Activated CD4-positive, alpha-beta T cell treated with anti-CD3 and anti-CD28 coated beads, Interleukin-2, amount 10 ng/mL, durations not matched to agents 24 days and 14 days (primary cell): ENCODE measurements at regions of chr2 and their contacts with region 1.

Region 1: GRCh38 chr2:15142069-15142873 is 418.9 kb downstream of the NBAS start:
- DNase-seq: peak; percentile 90
- H3K4me3 Mint-ChIP-seq: peak overlapping the region; percentile 45
- H3K27ac Mint-ChIP-seq: peak overlapping the region; percentile 90
- H3K4me1 Mint-ChIP-seq: peaks cover 23% of the 10 kb centered on the region
- H3K27me3 Mint-ChIP-seq: no peaks in the 10 kb centered on the region

Region 2: GRCh38 chr2:14855741-14856140 is 286.5 kb before region 1 on chr2:
- intact Hi-C with region 1: no loop called
- DNase-seq: no peak
- H3K4me3 Mint-ChIP-seq: no peak overlapping the region
- H3K27ac Mint-ChIP-seq: no peak overlapping the region
- H3K4me1 Mint-ChIP-seq: no peaks in the 10 kb centered on the region
- H3K27me3 Mint-ChIP-seq: no peaks in the 10 kb centered on the region

Region 3: DNA sequence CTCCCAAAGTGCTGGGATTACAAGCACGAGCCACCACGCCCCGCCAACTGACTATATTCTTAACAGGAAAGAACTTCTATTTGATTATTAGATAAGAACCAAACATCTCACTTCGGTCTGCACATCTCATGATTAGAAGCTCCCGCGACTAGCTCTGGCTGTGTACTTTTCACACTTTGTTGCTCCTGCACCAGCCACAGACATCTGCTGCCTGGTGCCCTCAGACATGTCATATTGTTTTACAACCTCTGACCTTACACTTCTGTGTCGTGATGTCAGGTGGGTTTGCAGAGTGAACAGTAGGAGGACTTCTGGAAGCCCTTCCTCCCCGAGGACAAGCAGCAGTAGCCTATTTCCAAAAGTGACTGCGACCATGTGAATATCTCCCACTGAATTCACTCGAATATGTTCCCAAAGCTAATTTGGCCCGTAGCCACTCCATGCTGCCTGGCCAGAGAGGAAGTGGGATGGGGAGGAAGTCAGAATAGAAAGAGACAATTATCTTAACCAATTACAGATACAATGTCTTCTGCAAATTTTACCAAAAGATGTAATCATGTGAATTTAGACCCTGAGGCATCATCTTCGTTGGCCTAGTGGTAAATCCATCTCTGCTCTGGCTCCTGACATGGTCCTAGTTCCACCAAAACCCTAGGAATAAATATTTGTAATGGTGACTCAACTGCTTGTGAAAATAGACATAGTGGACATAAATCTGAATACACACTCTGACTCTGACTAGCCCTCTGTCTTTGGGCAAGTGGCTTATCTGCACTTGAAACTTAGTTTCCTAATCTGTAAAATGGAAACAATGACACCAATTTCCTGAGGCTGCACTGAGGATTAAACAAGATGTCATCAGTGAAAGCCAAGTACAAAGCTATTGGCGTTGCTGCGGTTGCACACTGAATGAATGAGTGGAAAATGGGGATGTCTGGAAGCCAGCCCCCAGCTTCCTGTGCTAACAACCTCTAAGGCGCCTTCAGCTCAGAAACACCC is 103.6 kb before region 1 on chr2:
- intact Hi-C with region 1: loop called (anchors 1 kb)
- DNase-seq: peak; percentile 47
- H3K4me3 Mint-ChIP-seq: no peak overlapping the region
- H3K27ac Mint-ChIP-seq: no peak overlapping the region
- H3K4me1 Mint-ChIP-seq: peaks cover 6% of the 10 kb centered on the region
- H3K27me3 Mint-ChIP-seq: peaks cover 2% of the 10 kb centered on the region

Region 4: GRCh38 chr2:15084826-15085489 is 57.3 kb before region 1 on chr2:
- intact Hi-C with region 1: no loop called
- DNase-seq: no peak
- H3K4me3 Mint-ChIP-seq: no peak overlapping the region
- H3K27ac Mint-ChIP-seq: no peak overlapping the region
- H3K4me1 Mint-ChIP-seq: no peaks in the 10 kb centered on the region
- H3K27me3 Mint-ChIP-seq: peaks cover 8% of the 10 kb centered on the region

Region 5: GRCh38 chr2:15159751-15160177 is 17.5 kb after region 1 on chr2:
- intact Hi-C with region 1: loop called (anchors 2 kb)
- DNase-seq: peak; percentile 69
- H3K4me3 Mint-ChIP-seq: no peak overlapping the region
- H3K27ac Mint-ChIP-seq: no peak overlapping the region
- H3K4me1 Mint-ChIP-seq: peaks cover 3% of the 10 kb centered on the region
- H3K27me3 Mint-ChIP-seq: peaks cover 7% of the 10 kb centered on the region

Region 6: DNA sequence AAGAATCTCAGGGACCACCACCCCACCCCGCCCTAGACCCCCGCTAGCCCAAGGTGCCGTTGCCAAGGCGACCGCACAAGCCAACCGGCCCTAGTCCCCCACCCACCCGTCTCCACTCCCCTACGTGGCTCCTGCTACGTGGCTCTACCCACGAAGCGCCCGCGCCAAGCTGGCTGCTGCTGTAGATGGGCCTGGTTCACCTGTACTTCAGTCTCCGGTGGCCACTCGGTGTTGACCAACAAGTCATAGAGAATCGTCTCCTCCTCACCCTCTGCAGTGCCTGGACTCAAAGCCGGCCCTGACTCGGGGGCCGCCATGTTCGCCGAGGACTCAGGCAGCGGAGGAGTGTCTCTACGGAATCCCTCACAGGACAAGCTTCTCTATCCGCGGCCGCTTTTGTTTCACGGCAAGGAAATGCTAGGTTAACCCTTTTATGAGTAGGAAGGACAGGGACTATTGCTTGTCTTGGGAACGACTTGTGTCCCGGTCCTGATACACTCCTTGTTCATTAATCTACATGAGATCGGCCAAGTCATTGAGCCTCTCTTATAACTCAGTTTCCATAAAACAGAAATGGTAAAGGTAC is 418.8 kb after region 1 on chr2 and contains the start of gene NBAS:
- intact Hi-C with region 1: loop called (anchors 1 kb)
- DNase-seq: peak; percentile 92
- H3K4me3 Mint-ChIP-seq: peak within 1 kb of the TSS; percentile 99
- H3K27ac Mint-ChIP-seq: peak within 1 kb of the TSS; percentile 94
- H3K4me1 Mint-ChIP-seq: peaks cover 31% of the 10 kb centered on the region
- H3K27me3 Mint-ChIP-seq: peaks cover 3% of the 10 kb centered on the region
- total RNA-seq, gene NBAS: 37.4 and 38.5 TPM in 2 replicates

Region 7: DNA sequence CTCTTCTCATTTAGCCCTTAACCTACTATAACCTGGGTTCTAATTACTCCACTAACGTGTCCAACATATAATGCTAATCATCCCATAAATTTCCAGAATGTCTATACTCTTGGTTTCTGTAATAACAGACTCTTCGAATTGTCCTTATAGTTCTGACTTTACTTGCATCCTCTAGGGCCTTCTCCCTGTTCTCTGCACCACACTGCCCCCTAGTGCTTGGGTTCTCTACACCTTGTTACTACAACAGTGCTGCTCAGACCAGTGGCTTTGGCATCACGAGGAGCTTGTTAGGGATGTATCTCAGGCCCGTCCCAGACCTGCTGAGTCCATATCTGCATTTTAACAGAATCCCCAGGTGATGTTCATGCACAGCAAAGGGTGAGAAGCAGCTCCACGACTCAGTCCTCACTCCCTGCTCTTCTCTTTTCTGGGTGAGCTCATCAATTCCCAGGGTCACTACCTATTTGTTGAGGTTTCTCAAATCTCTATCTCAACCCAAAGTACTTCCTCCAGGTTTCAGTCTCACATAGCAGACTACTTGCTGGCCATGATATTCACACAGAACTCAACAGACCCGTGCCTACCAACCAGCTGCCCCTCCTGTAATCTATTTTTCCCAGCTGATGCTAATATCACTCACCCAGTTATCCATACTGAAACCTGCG is 434.9 kb after region 1 on chr2:
- intact Hi-C with region 1: loop called (anchors 5 kb)
- DNase-seq: peak; percentile 96
- H3K4me3 Mint-ChIP-seq: no peak overlapping the region
- H3K27ac Mint-ChIP-seq: no peak overlapping the region
- H3K4me1 Mint-ChIP-seq: no peaks in the 10 kb centered on the region
- H3K27me3 Mint-ChIP-seq: no peaks in the 10 kb centered on the region

Region 8: DNA sequence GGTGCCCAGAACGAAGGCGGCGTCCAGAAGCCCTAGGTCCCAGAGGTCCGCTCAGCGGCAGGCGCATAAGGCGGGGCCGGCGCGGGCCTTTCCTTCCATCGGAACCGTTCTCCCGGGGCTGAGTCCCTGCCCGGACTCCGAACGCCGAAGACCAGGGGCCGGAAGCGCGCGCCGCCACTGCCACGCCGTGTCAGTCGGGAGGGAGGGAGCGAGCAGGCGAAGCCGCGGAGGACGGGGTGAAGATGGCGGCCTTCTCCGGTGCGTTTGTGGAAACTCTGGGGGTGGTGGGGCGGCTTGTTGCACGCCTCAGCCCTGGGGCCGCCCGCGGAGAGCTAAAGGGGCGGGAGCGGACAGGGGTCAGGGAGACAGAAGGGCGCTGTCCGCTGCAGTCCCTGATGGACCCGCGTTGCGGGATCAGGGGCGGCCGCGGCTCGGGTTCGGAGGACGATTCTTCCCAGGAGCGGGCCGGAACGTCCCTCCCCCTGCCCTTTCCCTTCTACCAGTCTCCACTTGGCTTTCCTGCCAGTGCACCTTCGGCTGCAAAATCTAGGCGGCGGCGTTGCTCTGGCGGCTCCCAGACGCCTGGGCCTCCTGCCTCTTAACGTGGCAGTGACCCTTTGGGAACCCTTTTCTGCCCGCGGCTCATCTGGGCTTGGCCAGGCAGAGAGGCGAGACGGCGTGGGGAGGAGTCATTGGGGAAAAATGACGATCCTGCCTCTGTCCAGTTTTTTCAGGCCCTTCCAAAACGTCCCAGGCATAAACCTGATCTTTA is 449.6 kb after region 1 on chr2 and contains the start of gene DDX1:
- intact Hi-C with region 1: loop called (anchors 1 kb)
- DNase-seq: peak; percentile 96
- H3K4me3 Mint-ChIP-seq: peak within 1 kb of the TSS; percentile 89
- H3K27ac Mint-ChIP-seq: peak within 1 kb of the TSS; percentile 89
- H3K4me1 Mint-ChIP-seq: peaks cover 26% of the 10 kb centered on the region
- H3K27me3 Mint-ChIP-seq: no peaks in the 10 kb centered on the region
- total RNA-seq, gene DDX1: 116 TPM in 2 replicates